Pancreas (tissue), 10 donors: ENCODE measurements at regions of chr4 and their contacts with region 1.

Region 1: GRCh38 chr4:166165829-166166420 is 292.9 kb downstream of the TLL1 start:
- DNase-seq: peak in 2 of 6 donors; percentile 16 to 33
- ATAC-seq: peak; percentile 91 to 98 (median 94)
- H3K4me3 ChIP-seq: no peak overlapping the region
- H3K27ac ChIP-seq: no peak overlapping the region
- H3K4me1 ChIP-seq: no peaks in the 10 kb centered on the region
- H3K27me3 ChIP-seq: no peaks in the 10 kb centered on the region
- CTCF ChIP-seq: peak; percentile 42 to 71 (median 60)

Region 2: DNA sequence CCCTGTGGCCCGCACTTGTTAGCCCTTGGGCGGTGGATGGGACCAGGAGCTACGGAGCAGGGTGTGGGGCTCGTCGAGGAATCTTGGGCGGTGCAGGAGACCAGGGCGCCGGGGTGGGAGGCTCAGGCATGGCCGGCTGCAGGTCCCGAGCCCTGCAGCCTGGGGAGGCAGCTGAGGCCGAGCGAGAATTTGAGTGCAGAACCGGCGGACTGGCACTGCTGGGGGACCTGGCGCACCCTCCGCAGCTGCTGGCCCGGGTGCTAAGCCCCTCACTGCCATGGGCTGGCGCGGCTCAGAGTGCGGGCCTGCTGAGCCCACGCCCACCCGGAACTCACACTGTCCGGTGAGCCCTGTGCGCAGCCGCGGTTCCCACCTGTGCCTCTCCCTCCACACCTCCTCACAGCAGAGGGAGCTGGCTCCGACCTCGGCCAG is 366.5 kb before region 1 on chr4:
- intact Hi-C with region 1: no loop called
- DNase-seq: peak in 3 of 6 donors; percentile 11 to 62 (median 50)
- ATAC-seq: no peak
- H3K4me3 ChIP-seq: no peak overlapping the region
- H3K27ac ChIP-seq: no peak overlapping the region
- H3K4me1 ChIP-seq: peaks cover 0 to 6% (median 0%) of the 10 kb centered on the region in 3 donors
- H3K27me3 ChIP-seq: no peaks in the 10 kb centered on the region
- CTCF ChIP-seq: no peak

Region 3: GRCh38 chr4:166594326-166594946 is 428.5 kb after region 1 on chr4:
- intact Hi-C with region 1: loop called in 1 of 3 experiments (anchors 10 kb)
- DNase-seq: peak in 5 of 6 donors; percentile 19 to 63 (median 29)
- ATAC-seq: peak; percentile 73 to 97 (median 92)
- H3K4me3 ChIP-seq: no peak overlapping the region
- H3K27ac ChIP-seq: no peak overlapping the region
- H3K4me1 ChIP-seq: no peaks in the 10 kb centered on the region
- H3K27me3 ChIP-seq: no peaks in the 10 kb centered on the region
- CTCF ChIP-seq: peak in 2 of 4 donors; percentile 33

Region 4: GRCh38 chr4:166602068-166602467 is 436.1 kb after region 1 on chr4:
- intact Hi-C with region 1: loop called in 2 of 3 experiments (anchors 10 kb)
- DNase-seq: peak in 1 of 6 donors; percentile 49
- ATAC-seq: no peak
- H3K4me3 ChIP-seq: no peak overlapping the region
- H3K27ac ChIP-seq: no peak overlapping the region
- H3K4me1 ChIP-seq: no peaks in the 10 kb centered on the region
- H3K27me3 ChIP-seq: no peaks in the 10 kb centered on the region
- CTCF ChIP-seq: no peak